Activated CD8-positive, alpha-beta memory T cell treated with anti-CD3 and anti-CD28 coated beads, Interleukin-2, amount 10 ng/mL, durations not matched to agents 7 days and 5 days (primary cell): ENCODE measurements at regions of chr2 and their contacts with region 1.

Region 1: GRCh38 chr2:141611-142010 is 95.3 kb upstream of the FAM110C start:
- DNase-seq: no peak
- ATAC-seq: no peak
- H3K4me3 Mint-ChIP-seq: no peak overlapping the region
- H3K27ac Mint-ChIP-seq: no peak overlapping the region
- H3K4me1 Mint-ChIP-seq: no peaks in the 10 kb centered on the region
- H3K27me3 Mint-ChIP-seq: peaks cover 45% of the 10 kb centered on the region

Region 2: GRCh38 chr2:18402-19271 is 123.0 kb before region 1 on chr2:
- CTCF ChIA-PET with region 1: interaction called, 11 read pairs
- DNase-seq: no peak
- ATAC-seq: peak; percentile 39
- H3K4me3 Mint-ChIP-seq: no peak overlapping the region
- H3K27ac Mint-ChIP-seq: no peak overlapping the region
- H3K4me1 Mint-ChIP-seq: peaks cover 19% of the 10 kb centered on the region
- H3K27me3 Mint-ChIP-seq: peaks cover 23% of the 10 kb centered on the region

Region 3: GRCh38 chr2:24107-24506 is 117.5 kb before region 1 on chr2:
- CTCF ChIA-PET with region 1: interaction called, 11 read pairs
- DNase-seq: no peak
- ATAC-seq: peak; percentile 68
- H3K4me3 Mint-ChIP-seq: no peak overlapping the region
- H3K27ac Mint-ChIP-seq: peak overlapping the region; percentile 65
- H3K4me1 Mint-ChIP-seq: peaks cover 32% of the 10 kb centered on the region
- H3K27me3 Mint-ChIP-seq: peaks cover 2% of the 10 kb centered on the region

Region 4: GRCh38 chr2:193141-193671 is 51.6 kb after region 1 on chr2:
- CTCF ChIA-PET with region 1: no interaction called
- DNase-seq: peak; percentile 82
- ATAC-seq: peak; percentile 89
- H3K4me3 Mint-ChIP-seq: no peak overlapping the region
- H3K27ac Mint-ChIP-seq: peak overlapping the region; percentile 70
- H3K4me1 Mint-ChIP-seq: peaks cover 17% of the 10 kb centered on the region
- H3K27me3 Mint-ChIP-seq: no peaks in the 10 kb centered on the region

Region 5: GRCh38 chr2:287471-287885 is 145.9 kb after region 1 on chr2:
- CTCF ChIA-PET with region 1: no interaction called
- DNase-seq: no peak
- ATAC-seq: peak; percentile 63
- H3K4me3 Mint-ChIP-seq: no peak overlapping the region
- H3K27ac Mint-ChIP-seq: no peak overlapping the region
- H3K4me1 Mint-ChIP-seq: peaks cover 7% of the 10 kb centered on the region
- H3K27me3 Mint-ChIP-seq: peaks cover 54% of the 10 kb centered on the region